CD8-positive, alpha-beta T cell (primary cell): ENCODE measurements at regions of chr12 and their contacts with region 1.

Region 1: DNA sequence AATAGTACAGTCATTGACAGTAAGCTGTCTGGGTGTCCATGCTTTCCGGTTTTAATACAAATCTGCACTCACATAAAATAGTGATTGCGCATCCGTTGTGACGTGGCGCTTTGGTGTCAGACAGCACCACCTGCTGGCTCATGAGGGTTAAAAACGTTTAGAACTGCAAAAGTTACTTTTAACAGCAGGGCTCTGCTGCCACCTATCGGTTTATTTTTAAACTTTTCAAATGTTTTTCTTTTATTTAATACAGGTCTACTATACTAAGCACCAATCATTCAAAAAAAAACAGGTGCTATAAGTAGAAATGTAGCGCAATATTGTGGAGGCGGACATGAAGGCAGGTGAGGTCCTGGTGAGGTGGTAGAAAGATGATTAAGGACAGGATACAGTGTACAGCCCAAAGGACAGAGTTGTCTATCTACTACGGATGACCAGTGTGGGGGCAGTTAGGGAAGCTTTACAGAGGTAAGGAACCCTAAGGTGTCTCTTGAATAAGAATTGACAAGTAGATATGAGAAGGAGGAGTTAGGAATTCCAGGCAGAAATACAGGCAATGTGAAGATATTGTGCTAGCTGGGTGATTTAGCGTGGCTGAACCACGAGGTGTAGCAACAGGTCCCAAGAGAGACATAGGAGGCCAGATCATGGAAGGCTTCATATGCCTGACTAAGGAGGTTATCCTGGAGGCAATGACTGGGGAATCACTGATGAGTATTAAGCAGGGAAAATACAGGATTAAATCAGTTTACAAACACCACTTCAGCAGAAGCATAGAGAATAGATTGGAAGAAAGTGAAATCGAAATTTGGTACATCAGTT is 91.5 kb upstream of the PRB2 start:
- DNase-seq: peak; percentile 55 to 92 (median 79)
- ATAC-seq: peak; percentile 99
- H3K4me3 ChIP-seq: no peak overlapping the region
- H3K4me3 Mint-ChIP-seq: no peak overlapping the region
- H3K27ac ChIP-seq: no peak overlapping the region
- H3K27ac Mint-ChIP-seq: no peak overlapping the region
- H3K4me1 ChIP-seq: no peaks in the 10 kb centered on the region
- H3K4me1 Mint-ChIP-seq: peaks cover 8% of the 10 kb centered on the region
- H3K27me3 ChIP-seq: no peaks in the 10 kb centered on the region
- H3K27me3 Mint-ChIP-seq: no peaks in the 10 kb centered on the region
- CTCF ChIP-seq: peak; percentile 100

Region 2: GRCh38 chr12:10771132-10771733 is 715.6 kb before region 1 on chr12:
- CTCF ChIA-PET with region 1: interaction called, 94 read pairs
- POLR2A ChIA-PET with region 1: no interaction called
- intact Hi-C with region 1: loop called (anchors 1 kb)
- DNase-seq: peak in 2 of 9 experiments; percentile 59 to 72
- ATAC-seq: peak; percentile 81
- H3K4me3 ChIP-seq: no peak overlapping the region
- H3K4me3 Mint-ChIP-seq: no peak overlapping the region
- H3K27ac ChIP-seq: no peak overlapping the region
- H3K27ac Mint-ChIP-seq: no peak overlapping the region
- H3K4me1 ChIP-seq: no peaks in the 10 kb centered on the region
- H3K4me1 Mint-ChIP-seq: no peaks in the 10 kb centered on the region
- H3K27me3 ChIP-seq: peaks cover 2 to 5% of the 10 kb centered on the region in 2 experiments
- H3K27me3 Mint-ChIP-seq: peaks cover 39% of the 10 kb centered on the region
- CTCF ChIP-seq: peak; percentile 81

Region 3: GRCh38 chr12:10959804-10960203 is 527.0 kb before region 1 on chr12:
- CTCF ChIA-PET with region 1: no interaction called
- POLR2A ChIA-PET with region 1: no interaction called
- intact Hi-C with region 1: loop called (anchors 2 to 5 kb)
- DNase-seq: peak in 2 of 9 experiments; percentile 27 to 38
- ATAC-seq: peak; percentile 28
- H3K4me3 ChIP-seq: no peak overlapping the region
- H3K4me3 Mint-ChIP-seq: no peak overlapping the region
- H3K27ac ChIP-seq: no peak overlapping the region
- H3K27ac Mint-ChIP-seq: no peak overlapping the region
- H3K4me1 ChIP-seq: peaks cover 15% of the 10 kb centered on the region
- H3K4me1 Mint-ChIP-seq: peaks cover 25% of the 10 kb centered on the region
- H3K27me3 ChIP-seq: no peaks in the 10 kb centered on the region
- H3K27me3 Mint-ChIP-seq: no peaks in the 10 kb centered on the region
- CTCF ChIP-seq: no peak

Region 4: GRCh38 chr12:11228296-11228879 is 258.4 kb before region 1 on chr12:
- CTCF ChIA-PET with region 1: interaction called, 6 read pairs
- POLR2A ChIA-PET with region 1: no interaction called
- intact Hi-C with region 1: loop called (anchors 1 kb)
- DNase-seq: peak in 5 of 9 experiments; percentile 3 to 47 (median 25)
- ATAC-seq: no peak
- H3K4me3 ChIP-seq: no peak overlapping the region
- H3K4me3 Mint-ChIP-seq: no peak overlapping the region
- H3K27ac ChIP-seq: no peak overlapping the region
- H3K27ac Mint-ChIP-seq: no peak overlapping the region
- H3K4me1 ChIP-seq: no peaks in the 10 kb centered on the region
- H3K4me1 Mint-ChIP-seq: no peaks in the 10 kb centered on the region
- H3K27me3 ChIP-seq: no peaks in the 10 kb centered on the region
- H3K27me3 Mint-ChIP-seq: no peaks in the 10 kb centered on the region
- CTCF ChIP-seq: no peak

Region 5: DNA sequence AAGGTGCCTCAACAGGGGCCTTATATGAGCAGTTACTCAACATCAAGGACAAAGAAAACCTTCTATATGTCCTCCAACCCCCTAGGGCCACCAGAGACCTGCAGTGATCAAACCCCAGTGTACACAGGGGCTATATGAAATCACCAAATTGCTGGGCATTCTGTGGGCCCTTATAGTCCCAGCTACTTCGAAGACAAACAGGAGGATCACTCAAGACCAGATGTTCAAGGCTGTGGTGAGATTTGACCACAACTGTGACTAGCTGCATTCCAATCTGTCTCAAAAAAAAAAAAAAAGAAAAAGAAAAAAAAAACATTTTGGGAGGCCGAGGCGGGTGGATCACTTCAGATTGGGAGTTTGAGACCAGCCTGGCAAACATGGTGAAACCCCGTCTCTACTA is 40.5 kb before region 1 on chr12:
- CTCF ChIA-PET with region 1: no interaction called
- POLR2A ChIA-PET with region 1: no interaction called
- intact Hi-C with region 1: no loop called
- DNase-seq: no peak
- ATAC-seq: no peak
- H3K4me3 ChIP-seq: no peak overlapping the region
- H3K4me3 Mint-ChIP-seq: no peak overlapping the region
- H3K27ac ChIP-seq: no peak overlapping the region
- H3K27ac Mint-ChIP-seq: no peak overlapping the region
- H3K4me1 ChIP-seq: no peaks in the 10 kb centered on the region
- H3K4me1 Mint-ChIP-seq: no peaks in the 10 kb centered on the region
- H3K27me3 ChIP-seq: no peaks in the 10 kb centered on the region
- H3K27me3 Mint-ChIP-seq: peaks cover 2% of the 10 kb centered on the region
- CTCF ChIP-seq: no peak

Region 6: GRCh38 chr12:11545484-11546330 is 58.9 kb after region 1 on chr12:
- CTCF ChIA-PET with region 1: interaction called, 17 read pairs
- POLR2A ChIA-PET with region 1: interaction called, 3 read pairs
- intact Hi-C with region 1: no loop called
- DNase-seq: peak; percentile 13 to 85 (median 50)
- ATAC-seq: peak; percentile 80
- H3K4me3 ChIP-seq: peak overlapping the region; percentile 2 to 9
- H3K4me3 Mint-ChIP-seq: peak overlapping the region; percentile 64
- H3K27ac ChIP-seq: peak overlapping the region; percentile 74 to 76
- H3K27ac Mint-ChIP-seq: peak overlapping the region; percentile 95
- H3K4me1 ChIP-seq: peaks cover 39% of the 10 kb centered on the region
- H3K4me1 Mint-ChIP-seq: peaks cover 57% of the 10 kb centered on the region
- H3K27me3 ChIP-seq: no peaks in the 10 kb centered on the region
- H3K27me3 Mint-ChIP-seq: no peaks in the 10 kb centered on the region
- CTCF ChIP-seq: peak; percentile 35